T-cell (primary cell): ENCODE measurements at regions of chr4 and their contacts with region 1.

Region 1: GRCh38 chr4:110510955-110511544 is 35.1 kb downstream of the ENPEP start:
- DNase-seq: peak in 1 of 35 experiments; percentile 70
- ATAC-seq: peak in 1 of 4 experiments; percentile 38
- H3K4me3 ChIP-seq: no peak overlapping the region
- H3K4me3 Mint-ChIP-seq: no peak overlapping the region
- H3K27ac ChIP-seq: no peak overlapping the region
- H3K27ac Mint-ChIP-seq: no peak overlapping the region
- H3K4me1 ChIP-seq: peaks cover 0 to 3% of the 10 kb centered on the region in 2 experiments
- H3K4me1 Mint-ChIP-seq: peaks cover 10 to 11% (median 10%) of the 10 kb centered on the region in 3 donors
- H3K27me3 ChIP-seq: peaks cover 0 to 2% of the 10 kb centered on the region in 2 experiments
- H3K27me3 Mint-ChIP-seq: no peaks in the 10 kb centered on the region

Region 2: GRCh38 chr4:109998867-109999584 is 512.0 kb before region 1 on chr4:
- CTCF ChIA-PET with region 1: interaction called, 62 to 86 read pairs
- POLR2A ChIA-PET with region 1: no interaction called
- DNase-seq: peak in 13 of 35 experiments; percentile 0 to 84 (median 15)
- ATAC-seq: peak; percentile 59 to 80 (median 68)
- H3K4me3 ChIP-seq: no peak overlapping the region
- H3K4me3 Mint-ChIP-seq: no peak overlapping the region
- H3K27ac ChIP-seq: no peak overlapping the region
- H3K27ac Mint-ChIP-seq: no peak overlapping the region
- H3K4me1 ChIP-seq: no peaks in the 10 kb centered on the region
- H3K4me1 Mint-ChIP-seq: peaks cover 0 to 9% (median 0%) of the 10 kb centered on the region in 3 donors
- H3K27me3 ChIP-seq: peaks cover 0 to 3% of the 10 kb centered on the region in 2 experiments
- H3K27me3 Mint-ChIP-seq: peaks cover 3 to 9% of the 10 kb centered on the region in 2 donors

Region 3: GRCh38 chr4:110005461-110006056 is 505.5 kb before region 1 on chr4:
- CTCF ChIA-PET with region 1: interaction called, 62 to 86 read pairs
- POLR2A ChIA-PET with region 1: no interaction called
- DNase-seq: peak in 3 of 35 experiments; percentile 12 to 78 (median 15)
- ATAC-seq: peak in 1 of 4 experiments; percentile 69
- H3K4me3 ChIP-seq: no peak overlapping the region
- H3K4me3 Mint-ChIP-seq: no peak overlapping the region
- H3K27ac ChIP-seq: no peak overlapping the region
- H3K27ac Mint-ChIP-seq: no peak overlapping the region
- H3K4me1 ChIP-seq: no peaks in the 10 kb centered on the region
- H3K4me1 Mint-ChIP-seq: peaks cover 0 to 10% (median 4%) of the 10 kb centered on the region in 3 donors
- H3K27me3 ChIP-seq: no peaks in the 10 kb centered on the region
- H3K27me3 Mint-ChIP-seq: no peaks in the 10 kb centered on the region